Common myeloid progenitor, CD34-positive (primary cell): ENCODE measurements at regions of chr17 and their contacts with region 1.

Region 1: GRCh38 chr17:81566461-81567126 is 14.4 kb upstream of the FAAP100 start:
- DNase-seq: peak; percentile 75 to 94 (median 94)
- H3K4me3 ChIP-seq: peak overlapping the region in 6 of 7 experiments; percentile 28 to 62 (median 34)
- H3K27ac ChIP-seq: peak overlapping the region in 1 of 2 experiments; percentile 16
- H3K4me1 ChIP-seq: peaks cover 8 to 46% (median 40%) of the 10 kb centered on the region in 4 experiments
- H3K27me3 ChIP-seq: no peaks in the 10 kb centered on the region

Region 2: GRCh38 chr17:81508639-81509206 is 57.9 kb before region 1 on chr17:
- CTCF ChIA-PET with region 1: no interaction called
- POLR2A ChIA-PET with region 1: no interaction called
- DNase-seq: no peak
- H3K4me3 ChIP-seq: peak overlapping the region in 4 of 7 experiments; percentile 1 to 94 (median 90)
- H3K27ac ChIP-seq: no peak overlapping the region
- H3K4me1 ChIP-seq: peaks cover 4 to 47% (median 38%) of the 10 kb centered on the region in 4 experiments
- H3K27me3 ChIP-seq: no peaks in the 10 kb centered on the region

Region 3: DNA sequence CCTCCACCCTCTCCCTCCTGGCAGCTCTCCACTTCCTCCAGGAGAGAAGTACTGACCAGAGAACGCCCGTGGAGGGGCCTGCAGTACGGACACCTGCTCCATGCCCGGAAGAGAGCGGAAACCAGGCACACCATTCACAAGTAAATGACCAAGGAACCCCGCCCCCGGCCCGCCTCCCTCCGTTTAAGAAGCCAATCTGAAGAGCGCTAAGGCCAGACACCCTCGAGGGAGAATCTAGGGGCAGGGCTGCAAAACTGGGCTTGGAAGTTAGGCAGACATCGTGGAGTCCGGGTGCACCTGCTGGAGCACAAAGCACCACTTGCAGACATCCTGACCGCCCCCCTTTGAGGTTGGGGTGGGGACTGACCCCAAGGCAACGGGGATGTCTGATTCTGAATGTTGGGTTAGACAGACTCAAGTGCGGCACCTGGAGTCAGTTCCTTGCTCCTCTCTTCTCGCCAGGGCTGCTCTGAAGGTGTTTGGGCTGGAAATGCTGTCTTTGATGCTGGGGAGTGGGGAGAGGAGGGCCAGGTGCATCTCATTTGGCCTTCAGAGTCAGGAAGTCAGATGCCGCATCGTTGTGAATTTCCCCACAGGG is 13.5 kb before region 1 on chr17:
- CTCF ChIA-PET with region 1: interaction called, 4 read pairs
- POLR2A ChIA-PET with region 1: interaction called, 18 read pairs
- DNase-seq: peak; percentile 81 to 92 (median 90)
- H3K4me3 ChIP-seq: peak overlapping the region; percentile 69 to 92 (median 87)
- H3K27ac ChIP-seq: peak overlapping the region in 1 of 2 experiments; percentile 68
- H3K4me1 ChIP-seq: peaks cover 0 to 32% (median 29%) of the 10 kb centered on the region in 4 experiments
- H3K27me3 ChIP-seq: no peaks in the 10 kb centered on the region

Region 4: DNA sequence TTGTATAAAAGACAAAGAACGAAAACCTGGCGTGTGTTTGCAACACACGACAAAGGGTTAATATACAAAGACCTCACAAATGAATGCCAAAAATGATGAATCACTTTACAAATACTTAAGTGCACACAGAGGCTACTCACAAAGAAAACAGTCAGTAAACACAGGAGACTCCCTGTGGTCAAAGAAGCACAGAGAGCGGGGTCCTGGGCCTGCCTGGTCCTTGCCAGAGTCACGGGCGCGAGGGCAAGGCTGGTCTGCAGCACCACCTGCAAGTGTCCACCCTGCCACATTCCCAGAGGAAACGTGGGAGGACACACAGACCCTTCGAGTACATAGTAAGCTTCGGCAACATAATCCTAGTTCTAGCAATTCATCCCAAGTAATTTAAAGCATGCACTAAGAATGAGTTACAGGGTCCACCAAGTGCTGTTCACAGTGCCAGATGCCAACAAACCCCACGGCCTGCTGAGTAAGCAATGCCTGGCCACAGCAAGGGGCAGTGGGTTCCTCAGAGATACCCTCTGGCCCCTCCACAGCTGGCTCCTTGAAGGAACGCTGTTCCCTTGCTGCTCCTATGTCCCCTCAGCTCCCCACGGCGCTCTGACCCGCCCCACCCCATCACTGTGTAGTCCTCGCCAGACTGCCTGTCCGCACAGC is 10.2 kb after region 1 on chr17:
- CTCF ChIA-PET with region 1: interaction called, 13 read pairs
- POLR2A ChIA-PET with region 1: no interaction called
- DNase-seq: no peak
- H3K4me3 ChIP-seq: no peak overlapping the region
- H3K27ac ChIP-seq: no peak overlapping the region
- H3K4me1 ChIP-seq: peaks cover 0 to 10% (median 2%) of the 10 kb centered on the region in 4 experiments
- H3K27me3 ChIP-seq: no peaks in the 10 kb centered on the region

Region 5: GRCh38 chr17:81582341-81582740 is 15.7 kb after region 1 on chr17:
- CTCF ChIA-PET with region 1: interaction called, 13 read pairs
- POLR2A ChIA-PET with region 1: interaction called, 3 read pairs
- DNase-seq: no peak
- H3K4me3 ChIP-seq: no peak overlapping the region
- H3K27ac ChIP-seq: no peak overlapping the region
- H3K4me1 ChIP-seq: peaks cover 0 to 10% (median 2%) of the 10 kb centered on the region in 4 experiments
- H3K27me3 ChIP-seq: no peaks in the 10 kb centered on the region

Region 6: DNA sequence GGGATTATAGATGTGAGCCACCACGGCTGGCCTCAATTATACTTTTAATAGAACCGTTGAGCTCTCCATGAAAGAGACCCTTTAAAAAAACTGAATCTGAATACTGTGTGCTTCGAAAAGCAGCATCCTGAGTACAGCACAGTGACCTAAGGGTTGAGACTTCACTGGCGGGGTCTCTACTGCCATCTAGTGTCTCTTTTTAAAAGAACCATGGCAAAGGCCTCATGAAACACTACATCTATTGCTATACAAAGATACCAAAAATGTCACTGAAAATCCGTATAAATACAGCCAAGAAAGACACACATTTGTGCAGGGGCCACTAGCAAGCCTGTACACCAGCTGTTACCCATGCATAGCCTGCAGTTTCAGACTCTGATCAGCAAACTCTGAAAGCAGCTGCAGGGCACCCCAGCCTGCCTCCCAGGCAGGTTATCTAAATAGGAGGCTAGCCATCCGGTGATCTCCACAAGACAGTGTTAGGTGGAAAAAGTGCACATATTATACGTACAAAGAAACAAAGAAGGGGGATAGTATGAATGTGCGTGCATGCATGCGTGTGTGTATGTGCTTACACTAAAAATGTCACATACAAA is 35.0 kb after region 1 on chr17:
- CTCF ChIA-PET with region 1: interaction called, 12 read pairs
- POLR2A ChIA-PET with region 1: interaction called, 3 read pairs
- DNase-seq: peak; percentile 65 to 86 (median 76)
- H3K4me3 ChIP-seq: no peak overlapping the region
- H3K27ac ChIP-seq: no peak overlapping the region
- H3K4me1 ChIP-seq: no peaks in the 10 kb centered on the region
- H3K27me3 ChIP-seq: no peaks in the 10 kb centered on the region

Region 7: GRCh38 chr17:81636505-81637288 is 70.1 kb after region 1 on chr17 and contains the starts of genes NPLOC4 and TSPAN10:
- CTCF ChIA-PET with region 1: no interaction called
- POLR2A ChIA-PET with region 1: no interaction called
- DNase-seq: peak; percentile 77 to 83 (median 82)
- H3K4me3 ChIP-seq: peak within 1 kb of the TSS; percentile 82 to 98 (median 91)
- H3K27ac ChIP-seq: peak within 1 kb of the TSS; percentile 90 to 96
- H3K4me1 ChIP-seq: peaks cover 3 to 17% (median 13%) of the 10 kb centered on the region in 4 experiments
- H3K27me3 ChIP-seq: no peaks in the 10 kb centered on the region